Heart left ventricle (tissue), 16 donors: ENCODE measurements at regions of chr12 and their contacts with region 1.

Region 1: GRCh38 chr12:25074954-25075353 is 120.0 kb downstream of the DNAI7 start:
- DNase-seq: no peak
- ATAC-seq: no peak
- H3K4me3 ChIP-seq: no peak overlapping the region
- H3K27ac ChIP-seq: peak overlapping the region in 1 of 12 donors; percentile 22
- H3K4me1 ChIP-seq: peaks cover 0 to 50% (median 0%) of the 10 kb centered on the region in 12 donors
- H3K27me3 ChIP-seq: no peaks in the 10 kb centered on the region
- CTCF ChIP-seq: no peak
- POLR2A ChIP-seq: no peak

Region 2: GRCh38 chr12:25935355-25936144 is 860.6 kb after region 1 on chr12:
- intact Hi-C with region 1: loop called in 1 of 10 experiments (anchors 10 kb)
- DNase-seq: no peak
- ATAC-seq: no peak
- H3K4me3 ChIP-seq: no peak overlapping the region
- H3K27ac ChIP-seq: no peak overlapping the region
- H3K4me1 ChIP-seq: peaks cover 0 to 2% (median 0%) of the 10 kb centered on the region in 12 donors
- H3K27me3 ChIP-seq: no peaks in the 10 kb centered on the region
- CTCF ChIP-seq: no peak
- POLR2A ChIP-seq: no peak